ENCODE measurements at regions of chr10 and their contacts with region 1.

Region 1: GRCh38 chr10:128069351-128070051 is 56.7 kb downstream of the MKI67 start:
- DNase-seq: peak; percentile 85
- H3K4me3 ChIP-seq: no peak overlapping the region
- H3K27ac ChIP-seq: no peak overlapping the region
- H3K4me1 ChIP-seq: peaks cover 2% of the 10 kb centered on the region
- H3K27me3 ChIP-seq: no peaks in the 10 kb centered on the region
- CTCF ChIP-seq: peak; percentile 85

Region 2: DNA sequence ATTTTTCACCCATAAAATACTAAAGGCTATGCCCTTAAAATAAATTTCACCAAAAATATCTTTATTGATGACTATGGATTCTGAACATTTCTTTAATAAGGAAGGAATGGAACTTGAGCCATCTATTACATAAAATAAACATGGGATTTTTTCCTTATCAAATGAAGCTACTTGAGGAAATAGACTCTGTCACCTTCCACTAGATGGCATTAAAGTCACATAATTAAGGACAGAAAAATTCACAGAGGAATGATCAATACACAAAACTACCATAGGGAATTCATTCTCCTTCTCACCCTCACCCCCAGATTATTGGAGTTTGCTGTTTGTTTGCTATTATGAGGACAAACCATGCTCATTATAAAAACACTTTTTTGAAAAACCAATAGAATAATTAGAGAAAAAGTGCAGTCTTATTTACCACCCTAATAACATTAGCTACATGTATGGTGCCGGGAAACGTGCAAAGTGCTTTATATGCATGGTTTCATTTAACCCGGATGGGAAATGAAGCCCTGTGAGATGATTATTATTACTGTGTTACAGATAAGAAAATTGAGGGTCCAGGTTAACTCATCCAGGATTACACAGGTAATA is 353.6 kb before region 1 on chr10:
- CTCF ChIA-PET with region 1: interaction called, 11 read pairs
- POLR2A ChIA-PET with region 1: no interaction called
- intact Hi-C with region 1: loop called (anchors 2 kb)
- DNase-seq: peak; percentile 54
- H3K4me3 ChIP-seq: no peak overlapping the region
- H3K27ac ChIP-seq: no peak overlapping the region
- H3K4me1 ChIP-seq: no peaks in the 10 kb centered on the region
- H3K27me3 ChIP-seq: peaks cover 12% of the 10 kb centered on the region
- CTCF ChIP-seq: peak; percentile 61

Region 3: DNA sequence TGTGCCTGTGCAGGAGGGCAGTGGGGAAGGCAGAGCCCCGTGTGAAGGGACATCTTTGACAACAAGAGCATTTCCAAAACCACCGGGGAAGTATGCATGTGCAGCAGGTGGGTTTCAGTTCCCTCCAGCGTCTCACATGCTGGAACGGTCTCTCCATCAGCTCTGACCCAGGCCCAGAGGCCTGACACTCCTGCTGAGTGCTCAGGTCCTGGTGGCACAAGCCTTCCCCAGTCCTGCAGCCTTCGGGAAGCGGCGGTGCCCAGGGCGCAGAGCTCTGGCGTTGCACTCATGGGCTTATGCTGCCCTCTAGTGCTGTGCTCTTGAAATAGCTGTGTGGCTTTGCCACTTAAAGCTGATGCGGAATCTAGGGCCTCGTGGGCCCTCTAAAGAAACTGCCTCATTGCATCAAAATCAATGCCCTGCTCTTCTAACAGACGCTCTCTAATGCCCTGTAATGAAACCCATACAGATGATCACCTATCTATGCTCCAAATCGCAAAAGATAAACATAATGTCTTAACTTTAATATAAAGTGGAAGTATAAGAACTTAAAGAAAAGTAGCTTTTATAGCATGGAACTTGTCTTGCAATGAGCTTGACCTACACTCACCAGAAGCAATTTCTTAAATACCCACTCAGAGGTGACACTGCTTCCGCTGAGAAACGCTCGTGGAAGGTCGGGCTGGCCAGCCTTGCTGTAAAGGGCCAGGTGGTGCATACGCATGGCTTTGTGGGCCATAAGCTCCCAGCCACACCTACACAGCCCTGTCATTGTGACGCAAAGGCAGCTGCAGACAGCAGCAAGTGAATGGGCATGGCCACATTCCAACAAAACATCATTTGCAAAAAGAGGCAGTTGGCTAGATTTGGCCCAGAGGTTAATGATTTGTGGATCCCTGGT is 215.4 kb before region 1 on chr10:
- CTCF ChIA-PET with region 1: interaction called, 9 read pairs
- POLR2A ChIA-PET with region 1: no interaction called
- intact Hi-C with region 1: loop called (anchors 5 kb)
- DNase-seq: peak; percentile 77
- H3K4me3 ChIP-seq: no peak overlapping the region
- H3K27ac ChIP-seq: no peak overlapping the region
- H3K4me1 ChIP-seq: no peaks in the 10 kb centered on the region
- H3K27me3 ChIP-seq: no peaks in the 10 kb centered on the region
- CTCF ChIP-seq: peak; percentile 85

Region 4: DNA sequence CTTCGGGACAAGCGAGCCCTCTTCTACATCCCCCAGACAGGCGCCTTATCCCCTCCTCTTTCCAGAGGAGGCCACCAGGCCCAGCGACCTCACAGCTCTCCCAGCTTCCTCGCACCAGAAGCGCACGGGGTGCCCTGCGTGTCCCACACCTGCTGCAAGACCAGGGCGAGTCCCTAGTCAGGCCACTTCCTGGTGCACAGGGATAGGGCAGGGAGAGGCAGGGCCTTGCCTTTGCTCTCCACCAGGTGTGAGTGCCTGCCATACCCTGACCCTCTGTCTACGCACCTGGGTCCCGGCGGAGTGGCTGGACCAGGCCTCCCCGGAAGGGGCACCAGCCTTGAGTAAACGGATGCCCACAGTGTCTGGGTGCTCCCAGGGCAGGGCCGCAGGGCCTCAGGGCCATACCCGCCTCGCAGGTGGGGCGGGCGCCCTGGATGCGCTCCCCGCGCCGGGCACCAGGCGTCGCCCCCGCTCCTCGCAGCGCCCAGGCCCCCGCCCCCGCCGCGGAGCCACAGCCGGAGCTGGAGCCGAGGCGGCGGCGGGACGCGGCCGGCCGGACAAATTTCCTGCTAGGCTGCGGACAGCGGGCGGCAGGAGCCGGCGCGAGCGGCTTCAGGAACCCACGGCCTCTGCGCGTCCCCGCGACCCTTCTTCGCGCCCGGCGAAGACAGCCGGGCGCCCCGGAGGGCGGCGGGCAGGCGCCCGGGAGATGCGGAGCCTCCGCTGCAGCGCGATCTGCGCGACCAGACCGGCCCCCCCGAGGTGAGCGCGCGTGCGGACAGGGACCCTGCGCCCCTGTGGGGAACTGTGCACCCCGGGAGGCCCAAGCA is 162.7 kb before region 1 on chr10 and contains the start of gene PTPRE:
- CTCF ChIA-PET with region 1: interaction called, 17 read pairs
- POLR2A ChIA-PET with region 1: no interaction called
- intact Hi-C with region 1: loop called (anchors 1 kb)
- DNase-seq: peak; percentile 78
- H3K4me3 ChIP-seq: peak within 1 kb of the TSS; percentile 69
- H3K27ac ChIP-seq: no peak within 1 kb of the TSS
- H3K4me1 ChIP-seq: no peaks in the 10 kb centered on the region
- H3K27me3 ChIP-seq: peaks cover 7% of the 10 kb centered on the region
- CTCF ChIP-seq: peak; percentile 62
- total RNA-seq, gene PTPRE: 4.6 and 11.6 TPM in 2 replicates

Region 5: GRCh38 chr10:128011175-128011979 is 58.1 kb before region 1 on chr10:
- CTCF ChIA-PET with region 1: interaction called, 8 read pairs
- POLR2A ChIA-PET with region 1: no interaction called
- intact Hi-C with region 1: loop called (anchors 1 kb)
- DNase-seq: peak; percentile 84
- H3K4me3 ChIP-seq: no peak overlapping the region
- H3K27ac ChIP-seq: no peak overlapping the region
- H3K4me1 ChIP-seq: no peaks in the 10 kb centered on the region
- H3K27me3 ChIP-seq: no peaks in the 10 kb centered on the region
- CTCF ChIP-seq: peak; percentile 98

Region 6: DNA sequence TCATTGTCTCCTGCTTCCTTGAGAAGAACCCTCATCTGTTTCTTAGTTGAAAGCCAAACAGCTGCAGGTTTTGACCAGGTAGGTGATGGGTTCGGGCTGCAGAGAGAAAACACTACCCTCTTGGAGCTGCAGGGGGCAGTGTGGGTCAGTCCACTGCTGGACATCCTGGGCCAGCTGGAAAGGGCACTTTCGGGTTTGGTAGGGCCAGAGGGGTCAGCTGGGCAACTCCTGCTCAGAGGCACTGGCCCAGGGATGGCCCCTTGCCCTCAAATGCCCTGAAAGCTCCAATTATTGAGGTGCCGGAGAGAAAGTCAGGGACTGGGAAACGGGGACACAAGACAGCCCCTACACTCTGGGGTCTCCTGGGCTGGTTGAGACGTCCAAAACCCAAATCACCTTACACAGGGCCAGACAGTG is 33.9 kb before region 1 on chr10:
- CTCF ChIA-PET with region 1: interaction called, 17 read pairs
- POLR2A ChIA-PET with region 1: no interaction called
- intact Hi-C with region 1: no loop called
- DNase-seq: peak; percentile 17
- H3K4me3 ChIP-seq: no peak overlapping the region
- H3K27ac ChIP-seq: no peak overlapping the region
- H3K4me1 ChIP-seq: no peaks in the 10 kb centered on the region
- H3K27me3 ChIP-seq: no peaks in the 10 kb centered on the region
- CTCF ChIP-seq: peak; percentile 84

Region 7: DNA sequence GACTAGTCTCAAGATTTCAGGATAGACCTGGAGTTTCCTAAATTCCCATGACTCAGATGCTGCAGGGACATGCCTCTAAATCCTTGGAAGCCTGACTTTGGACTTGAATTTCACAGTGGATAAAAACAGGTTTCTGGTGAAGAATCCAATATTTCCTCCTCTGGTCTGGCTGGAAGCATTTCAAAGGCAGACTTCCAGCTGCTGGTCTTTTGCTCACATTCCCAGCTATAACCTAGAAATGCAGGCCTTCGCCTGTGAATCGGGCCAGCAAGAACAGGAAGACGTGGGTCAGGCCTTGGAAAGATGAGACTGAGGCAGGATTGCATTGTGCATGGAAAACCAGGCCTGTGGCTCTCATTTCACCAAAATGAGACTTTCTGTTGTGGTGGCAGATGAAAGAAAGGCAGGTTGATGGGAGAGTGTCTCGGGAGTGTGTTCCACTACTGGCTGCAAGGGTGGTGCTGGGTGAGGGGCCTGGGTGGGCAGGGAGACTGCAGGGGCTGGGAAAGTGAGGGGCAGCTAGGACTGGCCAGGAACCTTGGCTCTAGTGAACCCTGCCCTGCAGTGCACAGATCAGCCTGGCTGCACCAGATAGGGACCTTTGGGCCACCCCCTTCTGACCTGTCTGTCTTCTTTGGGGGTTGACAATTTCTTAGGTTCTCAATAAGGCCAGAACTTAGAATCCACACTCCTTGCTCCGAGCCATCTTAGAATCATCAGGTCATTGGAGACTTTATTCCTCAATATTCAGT is 545.5 kb after region 1 on chr10:
- CTCF ChIA-PET with region 1: no interaction called
- POLR2A ChIA-PET with region 1: no interaction called
- intact Hi-C with region 1: no loop called
- DNase-seq: no peak
- H3K4me3 ChIP-seq: no peak overlapping the region
- H3K27ac ChIP-seq: no peak overlapping the region
- H3K4me1 ChIP-seq: no peaks in the 10 kb centered on the region
- H3K27me3 ChIP-seq: peaks cover 10% of the 10 kb centered on the region
- CTCF ChIP-seq: no peak

Measured in A673 (cell line).